ENCODE measurements at regions of chr10 and their contacts with region 1.

Region 1: DNA sequence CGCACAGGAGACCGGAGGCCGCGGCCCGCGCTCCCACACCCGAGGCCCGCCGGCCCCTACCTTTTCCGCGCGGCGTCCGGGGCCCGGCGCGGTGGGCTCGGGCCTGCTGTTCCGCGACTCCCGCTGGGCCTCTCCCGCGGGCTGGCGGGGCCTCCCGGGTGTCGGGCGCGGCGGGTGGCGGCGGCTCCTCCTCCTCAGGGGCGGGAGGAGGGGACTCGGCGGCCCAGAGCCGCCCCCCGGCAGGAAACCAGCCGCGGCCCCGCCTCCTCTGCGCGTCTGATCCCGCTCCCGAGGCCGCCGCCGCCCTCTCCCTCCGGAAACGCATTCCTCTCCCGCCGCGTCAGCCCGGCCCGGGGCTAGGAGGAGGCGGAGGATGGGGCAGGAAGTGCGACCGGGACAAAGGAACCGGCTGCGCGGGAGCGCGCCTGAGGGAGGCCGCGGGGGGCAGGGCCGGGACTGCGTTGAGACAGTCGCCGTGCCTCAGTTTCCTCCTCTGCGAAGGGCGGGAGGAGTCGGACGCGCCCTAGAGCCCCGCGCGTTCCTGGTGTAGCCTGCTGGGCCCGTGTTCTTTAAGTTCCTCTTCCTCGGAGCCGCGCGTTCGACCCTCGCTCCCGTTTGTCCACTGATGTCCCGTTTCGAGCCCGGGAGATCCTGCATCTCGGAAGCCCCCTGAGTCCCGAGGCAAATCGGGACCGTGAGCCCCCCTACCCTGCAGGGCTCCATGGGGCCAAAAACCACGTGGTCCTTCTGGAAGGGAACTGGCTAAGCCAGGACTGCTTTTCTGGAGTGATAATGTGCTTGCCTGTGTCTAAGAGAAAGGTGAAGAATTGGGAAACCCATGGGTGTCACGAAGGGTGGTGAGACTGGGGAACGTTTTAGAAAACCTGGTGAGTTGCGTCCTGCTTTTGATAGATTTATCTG is at the start of gene ITGB1:
- DNase-seq: peak; percentile 84 to 89 (median 86)
- H3K4me3 ChIP-seq: peak within 1 kb of the TSS; percentile 75
- H3K4me3 Mint-ChIP-seq: peak within 1 kb of the TSS; percentile 87 to 95 (median 93)
- H3K27ac ChIP-seq: peak within 1 kb of the TSS; percentile 75
- H3K27ac Mint-ChIP-seq: peak within 1 kb of the TSS; percentile 69 to 95 (median 90)
- H3K4me1 ChIP-seq: peaks cover 32% of the 10 kb centered on the region
- H3K4me1 Mint-ChIP-seq: peaks cover 48 to 67% (median 50%) of the 10 kb centered on the region in 3 donors
- H3K27me3 ChIP-seq: no peaks in the 10 kb centered on the region
- H3K27me3 Mint-ChIP-seq: peaks cover 0 to 1% of the 10 kb centered on the region in 2 donors
- total RNA-seq, gene ITGB1: 75.5 to 82.1 TPM

Region 2: GRCh38 chr10:32980558-32981468 is 22.5 kb after region 1 on chr10:
- CTCF ChIA-PET with region 1: interaction called, 11 read pairs
- POLR2A ChIA-PET with region 1: interaction called, 13 read pairs
- DNase-seq: peak; percentile 70 to 89 (median 76)
- H3K4me3 ChIP-seq: peak overlapping the region; percentile 79
- H3K4me3 Mint-ChIP-seq: peak overlapping the region; percentile 87 to 98 (median 93)
- H3K27ac ChIP-seq: peak overlapping the region; percentile 94
- H3K27ac Mint-ChIP-seq: peak overlapping the region; percentile 91 to 100 (median 98)
- H3K4me1 ChIP-seq: peaks cover 37% of the 10 kb centered on the region
- H3K4me1 Mint-ChIP-seq: peaks cover 37 to 40% (median 39%) of the 10 kb centered on the region in 3 donors
- H3K27me3 ChIP-seq: no peaks in the 10 kb centered on the region
- H3K27me3 Mint-ChIP-seq: no peaks in the 10 kb centered on the region

Measured in CD8-positive, alpha-beta memory T cell (primary cell).